CD14-positive monocyte (primary cell): ENCODE measurements at regions of chr11 and their contacts with region 1.

Region 1: DNA sequence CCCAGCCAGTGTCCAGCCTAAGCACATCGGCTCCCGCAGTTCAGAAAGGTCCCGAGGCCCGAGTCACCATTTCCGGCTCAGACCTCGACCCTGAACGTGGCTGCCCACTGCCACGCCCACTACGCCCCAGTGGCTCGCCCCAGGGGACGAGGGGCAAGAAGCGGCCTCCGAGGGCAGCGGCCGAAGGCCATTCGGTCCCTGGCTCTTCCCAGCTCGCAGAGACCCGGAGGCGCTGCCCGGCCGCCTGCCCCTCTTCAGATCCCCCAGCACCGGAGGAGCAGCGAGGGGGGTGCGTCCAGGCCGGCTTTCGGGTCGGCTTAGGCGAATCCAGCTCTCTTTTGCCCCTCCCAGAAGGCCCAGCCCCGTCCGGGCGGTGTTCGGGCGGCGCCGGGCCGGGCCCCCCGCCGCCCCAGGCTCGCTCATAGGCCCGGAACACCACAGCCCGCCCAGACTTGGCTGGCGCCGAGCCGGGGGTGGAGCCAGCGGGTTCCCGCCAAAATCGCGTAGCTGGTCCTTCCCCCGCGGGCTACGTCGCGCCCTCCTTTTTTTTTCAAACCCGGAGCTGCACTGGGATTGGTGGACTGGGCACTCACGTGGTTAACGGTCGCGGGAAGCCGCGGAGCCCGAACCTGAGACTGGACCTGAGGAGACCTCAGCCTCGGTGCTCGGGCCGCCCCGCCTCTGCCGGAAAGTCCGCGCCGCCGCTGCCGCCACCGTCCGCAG is at the start of gene WEE1:
- DNase-seq: peak; percentile 91 to 93 (median 92)
- H3K4me3 ChIP-seq: peak within 1 kb of the TSS; percentile 74 to 93 (median 78)
- H3K4me3 Mint-ChIP-seq: peak within 1 kb of the TSS; percentile 97 to 98
- H3K27ac ChIP-seq: peak within 1 kb of the TSS; percentile 83
- H3K27ac Mint-ChIP-seq: peak within 1 kb of the TSS; percentile 60 to 93 (median 88)
- H3K4me1 ChIP-seq: peaks cover 10 to 27% of the 10 kb centered on the region in 2 donors
- H3K4me1 Mint-ChIP-seq: peaks cover 38% of the 10 kb centered on the region
- H3K27me3 ChIP-seq: no peaks in the 10 kb centered on the region
- H3K27me3 Mint-ChIP-seq: peaks cover 0 to 3% (median 0%) of the 10 kb centered on the region in 3 donors
- CTCF ChIP-seq: no peak
- polyA plus RNA-seq, gene WEE1: 0.05 to 0.41 (median 0.22) TPM

Region 2: DNA sequence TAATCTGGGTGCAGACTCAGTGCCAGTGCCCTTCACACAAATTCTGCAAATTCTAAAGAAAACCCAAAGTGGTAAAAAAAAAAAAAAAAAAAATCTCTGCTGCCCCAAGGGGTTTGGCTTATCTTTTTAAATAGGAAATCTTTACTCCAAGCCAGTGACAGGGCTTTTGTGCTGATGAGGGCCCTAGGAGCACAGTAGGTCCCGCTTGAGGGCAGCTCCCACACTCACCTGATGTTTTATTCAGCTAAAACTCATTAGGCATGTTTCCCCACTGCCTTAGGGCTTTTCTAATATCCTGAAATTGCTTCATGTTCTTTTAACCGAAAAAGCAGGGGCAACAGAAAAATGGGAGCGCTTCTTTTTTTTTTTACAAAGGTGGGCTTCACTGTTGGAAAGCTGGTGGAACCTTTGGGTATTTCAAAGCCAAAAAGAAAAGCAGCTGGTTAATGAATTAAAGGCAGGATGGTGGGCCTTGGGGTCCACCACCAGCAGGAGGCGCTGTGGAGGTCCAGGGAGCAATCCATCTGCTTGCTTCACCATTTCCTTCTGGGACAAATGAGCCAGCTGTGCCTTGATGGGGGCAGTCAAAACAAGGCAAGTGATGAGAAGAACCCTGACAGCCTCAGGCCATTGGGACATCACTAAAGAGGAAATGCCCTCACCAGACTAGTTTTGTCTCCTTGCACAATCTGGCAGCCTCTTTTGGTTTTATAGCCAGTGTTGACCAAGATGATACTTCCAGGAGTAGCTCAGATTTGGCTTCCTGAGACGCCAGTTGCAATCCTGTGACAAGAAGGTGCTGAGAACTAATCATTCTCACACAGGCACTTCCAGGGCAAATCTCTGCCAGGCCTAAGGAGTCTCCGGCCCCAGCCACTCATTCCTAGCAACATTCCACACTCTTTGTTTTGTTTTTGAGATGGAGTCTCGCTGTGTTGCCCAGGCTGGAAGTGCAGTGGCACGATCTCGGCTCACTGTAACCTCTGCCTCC is 38.1 kb before region 1 on chr11:
- intact Hi-C with region 1: loop called in 1 of 2 experiments (anchors 5 kb)
- DNase-seq: peak; percentile 77 to 91 (median 86)
- H3K4me3 ChIP-seq: no peak overlapping the region
- H3K4me3 Mint-ChIP-seq: no peak overlapping the region
- H3K27ac ChIP-seq: peak overlapping the region in 1 of 2 donors; percentile 2
- H3K27ac Mint-ChIP-seq: peak overlapping the region in 6 of 7 donors; percentile 14 to 68 (median 56)
- H3K4me1 ChIP-seq: peaks cover 8 to 11% of the 10 kb centered on the region in 2 donors
- H3K4me1 Mint-ChIP-seq: peaks cover 10% of the 10 kb centered on the region
- H3K27me3 ChIP-seq: no peaks in the 10 kb centered on the region
- H3K27me3 Mint-ChIP-seq: peaks cover 2 to 5% (median 2%) of the 10 kb centered on the region in 3 donors
- CTCF ChIP-seq: peak; percentile 94

Region 3: GRCh38 chr11:9550191-9550628 is 23.0 kb before region 1 on chr11:
- intact Hi-C with region 1: no loop called
- DNase-seq: no peak
- H3K4me3 ChIP-seq: no peak overlapping the region
- H3K4me3 Mint-ChIP-seq: no peak overlapping the region
- H3K27ac ChIP-seq: no peak overlapping the region
- H3K27ac Mint-ChIP-seq: peak overlapping the region in 2 of 7 donors; percentile 16 to 54
- H3K4me1 ChIP-seq: peaks cover 7 to 8% of the 10 kb centered on the region in 2 donors
- H3K4me1 Mint-ChIP-seq: peaks cover 9% of the 10 kb centered on the region
- H3K27me3 ChIP-seq: no peaks in the 10 kb centered on the region
- H3K27me3 Mint-ChIP-seq: peaks cover 0 to 2% (median 1%) of the 10 kb centered on the region in 3 donors
- CTCF ChIP-seq: no peak

Region 4: DNA sequence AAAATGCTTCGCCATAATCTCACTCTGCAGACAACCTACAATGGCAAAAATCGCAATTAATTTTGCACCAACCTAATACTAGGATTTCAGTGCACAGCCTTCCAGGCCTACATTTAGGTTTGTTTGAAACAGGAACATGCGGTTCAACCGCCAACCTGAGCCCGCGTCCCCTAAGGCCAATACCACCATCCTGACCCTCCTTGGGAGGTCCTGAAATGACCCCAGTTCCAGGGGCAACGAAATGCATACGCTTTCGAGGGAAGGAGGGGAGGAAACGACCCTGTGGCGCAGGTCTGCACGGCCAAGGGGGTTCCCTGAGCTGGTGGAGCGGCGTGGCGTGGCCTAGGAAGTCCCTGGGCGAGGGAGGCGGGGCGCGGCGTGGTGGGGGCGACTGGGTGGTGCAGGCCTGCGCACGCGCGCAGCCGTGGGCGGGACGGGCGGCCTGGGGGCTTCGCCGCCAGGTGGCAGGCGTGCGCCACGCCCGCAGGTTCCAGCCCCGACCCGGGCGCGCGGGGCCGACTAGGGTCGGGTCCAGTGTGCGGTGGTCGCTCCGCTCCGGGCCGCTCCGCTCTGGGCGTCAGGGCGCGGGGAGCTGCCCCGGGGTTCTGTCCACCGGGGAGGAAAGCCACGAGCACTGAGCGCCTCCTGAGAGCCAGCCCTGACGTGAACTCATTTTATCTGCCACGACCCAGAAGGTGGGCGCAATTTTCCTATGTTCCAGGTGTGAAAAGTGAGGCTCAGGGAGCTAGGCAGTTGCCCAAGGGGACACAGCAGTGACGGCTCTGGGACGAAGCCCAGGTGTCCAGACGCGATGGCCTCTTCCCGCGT is 184.8 kb after region 1 on chr11:
- intact Hi-C with region 1: loop called in 1 of 2 experiments (anchors 10 kb)
- DNase-seq: peak; percentile 78 to 92 (median 84)
- H3K4me3 ChIP-seq: peak overlapping the region; percentile 50 to 82 (median 66)
- H3K4me3 Mint-ChIP-seq: peak overlapping the region; percentile 76 to 91
- H3K27ac ChIP-seq: peak overlapping the region in 1 of 2 donors; percentile 75
- H3K27ac Mint-ChIP-seq: peak overlapping the region; percentile 38 to 91 (median 79)
- H3K4me1 ChIP-seq: peaks cover 19 to 24% of the 10 kb centered on the region in 2 donors
- H3K4me1 Mint-ChIP-seq: peaks cover 41% of the 10 kb centered on the region
- H3K27me3 ChIP-seq: no peaks in the 10 kb centered on the region
- H3K27me3 Mint-ChIP-seq: peaks cover 5 to 8% (median 7%) of the 10 kb centered on the region in 3 donors
- CTCF ChIP-seq: peak; percentile 92